ENCODE measurements at regions of chr2 and their contacts with region 1.

Region 1: DNA sequence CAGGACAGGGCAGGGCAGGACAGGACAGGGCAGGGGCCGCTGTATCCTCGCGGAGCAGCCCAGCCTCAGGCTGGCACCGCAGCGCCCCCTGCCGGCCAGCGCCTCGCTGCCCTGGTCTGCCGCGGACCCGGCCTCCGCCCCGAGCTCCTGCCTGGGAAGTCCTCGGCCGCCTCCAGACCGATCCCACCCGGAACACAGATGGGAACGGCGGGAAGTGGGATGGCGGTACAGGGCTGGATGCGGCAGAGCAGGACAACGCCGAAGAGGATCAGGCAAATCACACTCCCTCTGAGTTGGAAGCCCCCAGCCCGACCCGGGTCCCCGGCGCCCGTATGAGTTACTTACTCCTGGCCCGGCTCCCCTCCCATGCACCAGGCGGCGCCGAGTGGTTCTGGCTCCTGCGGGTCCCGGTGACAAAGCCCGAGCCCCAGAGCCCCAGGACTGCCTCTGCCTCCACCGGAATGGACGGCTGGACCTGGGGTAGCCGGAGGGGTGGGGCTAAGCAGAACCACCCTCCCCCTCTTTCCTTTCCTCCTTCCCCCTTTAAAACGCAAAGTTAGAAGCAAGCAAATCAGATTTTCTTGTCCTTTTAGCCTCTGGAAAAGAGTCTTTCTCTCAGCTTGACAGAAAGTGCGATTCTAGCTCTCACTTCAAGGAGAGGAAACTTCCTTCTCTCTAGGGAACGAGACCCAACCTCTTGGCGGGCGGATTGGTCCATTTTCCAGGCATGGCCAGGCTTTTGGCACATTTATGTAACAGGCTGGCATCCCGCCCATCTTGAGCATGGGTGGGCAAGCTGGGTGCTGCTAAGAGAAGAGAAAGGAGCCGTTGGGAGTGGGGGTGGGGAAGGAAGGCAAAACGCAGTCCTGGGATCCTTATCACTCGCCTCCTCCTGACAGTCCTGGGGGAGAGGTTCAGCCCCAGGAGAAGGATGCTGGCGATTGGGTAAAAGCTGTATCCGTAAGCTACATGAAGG is at the start of gene TP53I3:
- DNase-seq: peak; percentile 75 to 97
- H3K4me3 ChIP-seq: peak within 1 kb of the TSS; percentile 55 to 77 (median 66)
- H3K27ac ChIP-seq: peak within 1 kb of the TSS; percentile 89
- H3K4me1 ChIP-seq: peaks cover 4 to 11% (median 9%) of the 10 kb centered on the region in 4 experiments
- H3K27me3 ChIP-seq: no peaks in the 10 kb centered on the region
- CTCF ChIP-seq: peak; percentile 93 to 96 (median 93)
- EP300 ChIP-seq: peak in 1 of 2 experiments; percentile 65; a peak in 1 of 3 replicates
- POLR2A ChIP-seq: peak; percentile 90 to 92
- RAD21 ChIP-seq: peak; percentile 60 to 72
- total RNA-seq, gene TP53I3: 29.4 and 30.1 TPM in 2 replicates

Region 2: DNA sequence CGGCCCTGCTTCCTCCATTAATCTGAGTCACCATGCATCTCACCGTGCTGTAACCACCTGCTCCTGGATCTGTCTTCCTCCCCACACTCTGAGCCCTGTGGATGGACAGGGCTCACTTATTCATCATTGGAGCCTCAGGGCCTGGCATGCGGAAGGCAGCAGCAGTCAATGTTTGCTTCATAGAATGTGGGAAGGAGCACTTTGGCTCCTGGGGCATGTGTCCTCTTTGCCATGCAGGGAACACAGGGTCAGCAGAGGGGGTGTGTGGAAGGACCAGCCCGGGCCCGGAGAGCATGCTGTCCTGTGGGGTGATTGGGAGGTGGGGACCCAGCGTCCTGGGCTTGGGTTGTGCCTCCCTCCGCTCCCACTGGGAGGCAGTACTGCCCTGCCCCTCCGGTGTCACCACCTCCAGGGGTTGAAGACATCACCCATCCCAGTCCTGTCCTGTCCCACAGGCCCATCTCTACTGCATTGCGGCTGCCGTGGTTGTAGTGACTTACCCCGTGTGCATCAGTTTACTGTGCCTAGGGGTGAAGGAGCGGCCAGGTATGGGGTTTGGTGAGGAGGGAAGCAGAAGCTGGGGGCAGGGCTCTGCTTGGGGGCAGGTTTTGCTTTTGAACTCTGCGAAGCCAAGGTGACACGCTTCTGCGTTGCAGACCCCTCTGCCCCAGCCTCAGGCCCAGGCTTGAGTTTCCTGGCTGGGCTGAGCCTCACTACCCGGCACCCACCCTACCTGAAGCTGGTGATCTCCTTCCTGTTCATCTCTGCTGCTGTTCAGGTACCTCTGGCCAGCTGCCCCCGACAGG is 63.3 kb before region 1 on chr2:
- CTCF ChIA-PET with region 1: interaction called, 16 read pairs
- POLR2A ChIA-PET with region 1: interaction called, 18 read pairs
- DNase-seq: peak; percentile 43 to 83
- H3K4me3 ChIP-seq: no peak overlapping the region
- H3K27ac ChIP-seq: no peak overlapping the region
- H3K4me1 ChIP-seq: peaks cover 11 to 38% (median 18%) of the 10 kb centered on the region in 4 experiments
- H3K27me3 ChIP-seq: no peaks in the 10 kb centered on the region
- CTCF ChIP-seq: peak in 2 of 3 experiments; percentile 85 to 93; a peak in 3 of 4 replicates
- EP300 ChIP-seq: no peak
- POLR2A ChIP-seq: peak in 1 of 2 experiments; percentile 18; a peak in 1 of 3 replicates
- RAD21 ChIP-seq: peak; percentile 93 to 95

Region 3: GRCh38 chr2:24065341-24065740 is 19.3 kb before region 1 on chr2:
- CTCF ChIA-PET with region 1: interaction called, 25 read pairs
- POLR2A ChIA-PET with region 1: interaction called, 6 read pairs
- DNase-seq: no peak
- H3K4me3 ChIP-seq: no peak overlapping the region
- H3K27ac ChIP-seq: no peak overlapping the region
- H3K4me1 ChIP-seq: no peaks in the 10 kb centered on the region
- H3K27me3 ChIP-seq: no peaks in the 10 kb centered on the region
- CTCF ChIP-seq: no peak
- EP300 ChIP-seq: no peak
- POLR2A ChIP-seq: no peak
- RAD21 ChIP-seq: no peak

Region 4: DNA sequence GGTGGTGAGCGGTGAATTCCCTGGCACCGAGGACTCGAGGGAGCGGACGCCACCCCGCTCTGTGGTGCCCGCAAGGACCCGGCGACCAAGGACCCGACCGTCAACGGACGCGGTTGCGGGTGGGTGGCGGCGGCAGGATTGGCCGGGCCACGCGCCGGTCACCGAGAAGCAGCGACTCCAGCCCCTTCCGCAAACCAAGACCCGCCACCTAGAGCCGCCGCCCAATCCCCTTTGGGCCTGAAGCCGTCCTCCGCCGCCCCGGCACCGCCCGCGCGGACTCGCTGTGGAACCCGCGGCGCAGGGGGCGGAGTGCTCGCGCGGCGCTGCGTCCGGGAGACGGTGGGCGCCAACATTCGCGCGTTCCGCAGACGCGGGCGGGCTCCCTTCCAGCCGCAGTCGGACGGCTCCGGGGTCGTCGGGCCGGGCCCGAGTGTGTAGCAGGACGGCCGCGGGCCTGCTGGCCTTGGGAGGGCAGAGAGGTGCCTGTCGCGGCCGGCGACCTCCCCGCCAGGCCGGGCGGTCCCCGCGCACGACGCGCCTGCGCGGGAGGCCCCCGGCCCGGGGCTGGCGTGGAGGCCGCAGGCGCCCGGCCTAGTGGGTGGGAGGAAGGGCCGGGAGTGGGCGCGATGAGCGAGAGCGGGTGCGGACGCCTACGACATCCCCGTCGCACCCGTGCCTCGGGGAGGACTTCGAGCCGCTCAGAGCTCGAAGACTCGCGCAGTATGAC is 38.7 kb after region 1 on chr2 and contains the starts of genes FAM228B and PFN4:
- CTCF ChIA-PET with region 1: interaction called, 7 read pairs
- POLR2A ChIA-PET with region 1: interaction called, 24 read pairs
- DNase-seq: peak in 1 of 2 experiments; percentile 84
- H3K4me3 ChIP-seq: peak within 1 kb of the TSS; percentile 60 to 68 (median 66)
- H3K27ac ChIP-seq: 0 out of 2 replicates have a peak within 1 kb of the TSS, but pooled peaks have one; percentile 6
- H3K4me1 ChIP-seq: peaks cover 4 to 7% (median 6%) of the 10 kb centered on the region in 4 experiments; a peak in 6 of 7 replicates
- H3K27me3 ChIP-seq: peaks cover 0 to 10% (median 4%) of the 10 kb centered on the region in 4 experiments; a peak in 4 of 7 replicates
- CTCF ChIP-seq: no peak
- EP300 ChIP-seq: no peak
- POLR2A ChIP-seq: peak; percentile 55 to 62
- RAD21 ChIP-seq: no peak
- total RNA-seq, gene FAM228B: 3.2 and 3.5 TPM in 2 replicates
- total RNA-seq, gene PFN4: not detected in 2 replicates

Measured in H1 (cell line).